Gastrocnemius medialis (tissue), 4 donors: ENCODE measurements at regions of chr16 and their contacts with region 1.

Region 1: GRCh38 chr16:89873972-89874689 is 739 bp downstream of the TCF25 start:
- DNase-seq: peak; percentile 92 to 94
- ATAC-seq: peak; percentile 74 to 79
- H3K4me3 ChIP-seq: peak overlapping the region; percentile 94 to 99 (median 96)
- H3K27ac ChIP-seq: peak overlapping the region; percentile 99 to 100 (median 100)
- H3K4me1 ChIP-seq: peaks cover 10 to 14% of the 10 kb centered on the region in 2 donors
- H3K27me3 ChIP-seq: no peaks in the 10 kb centered on the region
- CTCF ChIP-seq: no peak
- POLR2A ChIP-seq: no peak

Region 2: GRCh38 chr16:89815639-89816348 is 58.3 kb before region 1 on chr16:
- in situ Hi-C with region 1: loop called in 1 of 4 experiments (anchors 5 kb)
- intact Hi-C with region 1: loop called (anchors 2 kb)
- DNase-seq: no peak
- ATAC-seq: no peak
- H3K4me3 ChIP-seq: peak overlapping the region; percentile 37 to 83 (median 58)
- H3K27ac ChIP-seq: no peak overlapping the region
- H3K4me1 ChIP-seq: peaks cover 4 to 12% of the 10 kb centered on the region in 2 donors
- H3K27me3 ChIP-seq: peaks cover 4 to 7% (median 7%) of the 10 kb centered on the region in 3 donors
- CTCF ChIP-seq: no peak
- POLR2A ChIP-seq: no peak